ENCODE measurements at regions of chr14 and their contacts with region 1.

Region 1: GRCh38 chr14:50773632-50774541 is 57.1 kb downstream of the NIN start:
- DNase-seq: peak; percentile 56 to 79
- H3K4me3 ChIP-seq: no peak overlapping the region
- H3K4me1 ChIP-seq: peaks cover 2% of the 10 kb centered on the region; the same call in 1 of the 2 replicates
- H3K27me3 ChIP-seq: no peaks in the 10 kb centered on the region

Region 2: DNA sequence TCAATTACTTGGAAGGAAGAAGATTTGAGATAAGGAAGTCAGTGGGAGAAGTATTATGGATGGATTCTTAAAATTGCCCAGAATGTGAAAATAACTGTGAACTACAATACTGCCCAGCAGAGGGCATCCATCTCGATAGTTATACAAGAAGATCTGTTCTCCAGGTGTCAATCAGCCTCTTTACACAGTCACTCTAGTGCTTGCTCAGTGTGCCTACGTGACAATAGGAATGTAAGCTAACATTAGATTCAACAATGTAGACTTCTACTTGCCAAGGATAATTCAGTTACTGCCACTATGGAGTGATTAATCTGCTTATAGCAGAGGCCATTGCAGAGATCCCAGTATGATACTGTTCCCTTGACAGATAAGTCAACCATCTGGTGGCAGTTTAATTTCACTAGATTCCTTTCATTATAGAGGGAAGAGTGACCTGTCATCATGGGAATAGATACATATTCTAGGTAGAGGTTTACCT is 230.9 kb before region 1 on chr14:
- in situ Hi-C with region 1: loop called (anchors 5 kb)
- DNase-seq: peak; percentile 66 to 80
- H3K4me3 ChIP-seq: no peak overlapping the region
- H3K4me1 ChIP-seq: peaks cover 3% of the 10 kb centered on the region; the same call in 1 of the 2 replicates
- H3K27me3 ChIP-seq: no peaks in the 10 kb centered on the region

Region 3: GRCh38 chr14:50619556-50620141 is 154.2 kb before region 1 on chr14:
- in situ Hi-C with region 1: loop called (anchors 10 kb)
- DNase-seq: peak in 1 of 2 experiments; percentile 45
- H3K4me3 ChIP-seq: no peak overlapping the region
- H3K4me1 ChIP-seq: peaks cover 10% of the 10 kb centered on the region
- H3K27me3 ChIP-seq: no peaks in the 10 kb centered on the region

Region 4: DNA sequence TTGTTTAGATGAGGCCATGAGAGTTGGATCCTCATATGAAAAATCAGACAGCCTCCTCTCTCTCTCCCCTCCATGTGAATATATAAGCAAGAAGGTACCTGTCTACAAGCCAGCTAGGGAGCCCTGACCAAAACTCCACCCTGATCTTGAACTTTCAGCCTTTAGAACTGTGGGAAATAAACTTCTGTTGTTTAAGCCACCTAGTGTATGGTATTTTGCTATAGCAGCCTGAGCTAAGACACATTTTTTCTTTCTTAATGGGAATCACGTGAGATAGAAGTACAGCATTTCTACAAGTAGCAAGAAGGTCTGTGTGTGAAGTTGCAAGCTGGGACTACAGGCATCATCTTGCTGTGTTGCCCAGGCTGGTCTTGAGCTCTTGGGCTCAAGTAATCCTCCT is 81.7 kb after region 1 on chr14:
- in situ Hi-C with region 1: no loop called
- DNase-seq: no peak
- H3K4me3 ChIP-seq: no peak overlapping the region
- H3K4me1 ChIP-seq: peaks cover 10% of the 10 kb centered on the region
- H3K27me3 ChIP-seq: no peaks in the 10 kb centered on the region